Activated CD4-positive, alpha-beta T cell treated with anti-CD3 and anti-CD28 coated beads for 36 hours (primary cell): ENCODE measurements at regions of chr12 and their contacts with region 1.

Region 1: DNA sequence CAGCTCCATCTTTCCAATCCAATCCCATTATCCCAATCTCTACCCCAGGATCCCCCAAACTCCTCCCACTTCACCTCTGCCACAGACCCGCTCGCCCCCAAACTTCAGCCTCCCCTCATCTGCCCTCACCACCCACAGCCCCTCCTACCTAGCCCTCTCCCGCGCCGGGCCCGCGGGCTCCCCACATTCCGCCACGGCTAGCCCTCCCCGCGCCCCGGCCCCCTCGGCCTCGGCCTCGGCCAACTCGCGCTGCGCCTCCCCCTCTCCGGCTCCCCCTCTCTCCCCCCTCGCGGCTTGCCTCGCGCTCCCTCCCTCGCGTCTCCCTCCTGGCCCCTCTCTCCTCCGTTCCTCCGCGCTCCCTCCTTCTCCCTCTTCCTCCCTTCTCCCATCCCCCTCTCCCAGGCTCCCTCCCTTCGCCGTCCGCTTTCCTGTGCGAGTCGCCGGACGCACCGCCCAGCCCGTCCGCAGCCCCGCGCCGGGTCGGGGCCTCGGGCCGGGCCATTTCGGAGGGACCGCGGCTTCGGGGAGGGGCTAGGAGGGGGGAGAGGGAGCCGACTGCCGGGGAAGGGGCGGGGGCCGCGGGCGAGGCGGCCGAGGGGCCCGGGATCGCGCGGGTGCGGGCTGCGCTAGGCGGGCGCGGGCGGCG is at the start of gene ATN1:
- DNase-seq: peak; percentile 69
- ATAC-seq: peak; percentile 31
- H3K4me3 Mint-ChIP-seq: peak within 1 kb of the TSS; percentile 83
- H3K27ac Mint-ChIP-seq: peak within 1 kb of the TSS; percentile 84
- H3K4me1 Mint-ChIP-seq: peaks cover 58% of the 10 kb centered on the region
- H3K27me3 Mint-ChIP-seq: no peaks in the 10 kb centered on the region
- total RNA-seq, gene ATN1: 32.2 to 32.4 TPM

Region 2: GRCh38 chr12:6914246-6914946 is 13.1 kb before region 1 on chr12 and contains the start of gene ENO2:
- CTCF ChIA-PET with region 1: interaction called, 7 read pairs
- POLR2A ChIA-PET with region 1: no interaction called
- intact Hi-C with region 1: loop called in 1 of 2 experiments (anchors 2 kb)
- DNase-seq: peak; percentile 92
- ATAC-seq: peak; percentile 92
- H3K4me3 Mint-ChIP-seq: peak within 1 kb of the TSS; percentile 98
- H3K27ac Mint-ChIP-seq: peak within 1 kb of the TSS; percentile 80
- H3K4me1 Mint-ChIP-seq: peaks cover 35% of the 10 kb centered on the region
- H3K27me3 Mint-ChIP-seq: no peaks in the 10 kb centered on the region
- total RNA-seq, gene ENO2: 301 to 317 TPM

Region 3: DNA sequence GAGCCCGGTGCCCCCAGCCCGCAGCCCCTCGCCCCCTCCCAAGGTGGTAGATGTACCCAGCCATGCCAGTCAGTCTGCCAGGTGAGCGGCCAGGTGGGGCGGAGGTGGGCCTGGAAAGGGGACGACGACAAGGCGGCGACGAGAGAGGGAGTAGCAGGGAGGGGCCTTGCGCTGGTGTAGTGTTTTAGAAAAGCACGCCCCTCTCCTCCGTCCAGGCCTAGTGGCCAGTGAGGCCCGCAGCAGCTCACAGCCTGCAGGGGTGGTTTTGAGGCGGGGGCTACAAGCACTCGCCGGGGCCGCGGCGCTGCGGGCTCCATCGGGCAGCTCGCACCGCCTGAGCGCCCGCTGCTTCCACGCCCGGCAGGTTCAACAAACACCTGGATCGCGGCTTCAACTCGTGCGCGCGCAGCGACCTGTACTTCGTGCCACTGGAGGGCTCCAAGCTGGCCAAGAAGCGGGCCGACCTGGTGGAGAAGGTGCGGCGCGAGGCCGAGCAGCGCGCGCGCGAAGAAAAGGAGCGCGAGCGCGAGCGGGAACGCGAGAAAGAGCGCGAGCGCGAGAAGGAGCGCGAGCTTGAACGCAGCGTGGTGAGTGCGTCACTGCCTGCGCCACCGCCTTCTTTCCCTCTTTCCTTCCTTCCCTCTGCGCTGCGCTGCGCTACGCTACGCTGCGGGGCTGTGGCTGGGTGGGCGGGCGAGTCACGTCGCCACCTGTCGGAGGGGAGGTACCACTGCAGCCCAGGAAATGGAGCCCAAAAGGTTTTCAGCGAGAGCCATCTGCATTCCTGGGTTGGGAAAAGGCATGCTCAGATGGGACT is 10.2 kb after region 1 on chr12:
- CTCF ChIA-PET with region 1: interaction called, 59 read pairs
- POLR2A ChIA-PET with region 1: interaction called, 4 read pairs
- intact Hi-C with region 1: loop called in 1 of 2 experiments (anchors 1 kb)
- DNase-seq: peak; percentile 97
- ATAC-seq: peak; percentile 93
- H3K4me3 Mint-ChIP-seq: peak overlapping the region; percentile 83
- H3K27ac Mint-ChIP-seq: peak overlapping the region; percentile 96
- H3K4me1 Mint-ChIP-seq: peaks cover 52% of the 10 kb centered on the region
- H3K27me3 Mint-ChIP-seq: no peaks in the 10 kb centered on the region

Region 4: DNA sequence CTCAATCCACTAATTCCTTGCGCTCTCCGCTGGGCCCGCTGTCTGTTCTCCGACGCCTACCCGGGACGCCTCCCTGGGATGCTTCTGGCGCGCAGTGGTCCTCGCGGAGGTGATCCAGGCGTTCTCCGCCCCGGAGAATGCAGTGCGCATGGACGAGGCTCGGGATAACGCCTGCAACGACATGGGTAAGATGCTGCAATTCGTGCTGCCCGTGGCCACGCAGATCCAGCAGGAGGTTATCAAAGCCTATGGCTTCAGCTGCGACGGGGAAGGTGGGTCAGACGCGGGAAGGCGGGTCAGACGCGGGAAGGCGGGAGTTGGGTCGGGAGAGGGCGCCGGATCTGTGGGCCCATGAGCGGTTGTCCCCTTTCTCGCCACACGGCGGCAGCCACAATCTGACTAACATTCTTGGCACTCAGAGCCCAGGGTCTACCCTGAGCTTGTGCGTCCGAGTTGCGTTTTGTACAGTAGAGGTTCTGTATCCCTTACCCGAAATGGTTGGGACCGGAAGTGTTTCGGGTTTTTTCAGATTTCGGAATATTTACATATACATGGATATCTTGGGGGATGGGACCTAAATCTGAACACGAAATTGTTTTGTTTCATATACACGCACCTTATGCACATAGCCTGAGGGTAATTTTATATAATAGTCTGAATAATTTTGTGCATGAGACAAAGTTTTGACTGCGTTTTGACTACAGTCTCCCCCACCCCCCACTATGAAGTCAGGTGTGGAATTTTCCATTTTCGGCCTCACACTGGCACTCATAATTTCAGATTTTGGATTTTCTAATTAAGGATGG is 17.1 kb after region 1 on chr12:
- CTCF ChIA-PET with region 1: interaction called, 59 read pairs
- POLR2A ChIA-PET with region 1: interaction called, 26 read pairs
- intact Hi-C with region 1: loop called in 1 of 2 experiments (anchors 2 kb)
- DNase-seq: peak; percentile 94
- ATAC-seq: peak; percentile 54
- H3K4me3 Mint-ChIP-seq: peak overlapping the region; percentile 81
- H3K27ac Mint-ChIP-seq: peak overlapping the region; percentile 97
- H3K4me1 Mint-ChIP-seq: peaks cover 59% of the 10 kb centered on the region
- H3K27me3 Mint-ChIP-seq: no peaks in the 10 kb centered on the region

Region 5: DNA sequence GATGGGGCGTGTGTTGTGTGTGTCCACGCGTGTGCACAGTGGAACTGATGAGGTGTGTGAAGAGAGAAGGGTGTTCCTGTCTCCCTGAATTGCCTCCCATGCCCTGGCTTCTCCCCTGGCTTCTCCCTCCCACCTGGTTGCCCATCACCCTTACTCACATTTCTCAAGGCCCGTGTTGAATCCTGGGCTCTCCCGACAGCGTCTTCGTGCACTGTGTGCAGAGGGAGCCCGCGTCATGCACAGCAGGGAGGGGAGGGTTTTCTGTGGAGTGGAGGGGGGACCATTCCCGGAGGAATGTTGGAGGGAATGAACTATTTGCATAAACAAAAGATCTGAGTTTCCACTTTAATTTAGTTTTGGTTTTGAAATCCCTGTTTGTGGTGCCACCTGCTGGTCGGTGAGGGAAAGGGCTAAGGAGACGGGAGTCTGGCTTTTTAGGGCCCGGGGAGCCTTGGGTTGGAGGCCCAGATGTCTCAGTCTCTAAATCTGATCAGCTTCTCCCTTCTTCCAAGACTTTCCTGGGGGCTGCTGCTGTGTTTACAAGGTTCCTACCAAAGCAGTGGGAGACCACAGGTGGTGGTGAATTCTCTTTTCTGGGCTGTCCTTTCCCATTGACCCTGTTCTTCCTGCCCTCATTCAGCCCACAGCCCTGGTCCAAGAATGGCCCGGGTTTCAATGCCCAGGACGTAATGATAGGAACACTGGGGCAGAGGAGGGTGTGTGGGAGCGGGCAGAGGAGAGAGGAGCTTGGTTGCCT is 164.9 kb after region 1 on chr12 and contains the start of gene C1R:
- CTCF ChIA-PET with region 1: interaction called, 8 read pairs
- POLR2A ChIA-PET with region 1: no interaction called
- intact Hi-C with region 1: loop called (anchors 1 kb)
- DNase-seq: peak; percentile 85
- ATAC-seq: peak; percentile 86
- H3K4me3 Mint-ChIP-seq: peak within 1 kb of the TSS; percentile 59
- H3K27ac Mint-ChIP-seq: peak within 1 kb of the TSS; percentile 80
- H3K4me1 Mint-ChIP-seq: peaks cover 6% of the 10 kb centered on the region
- H3K27me3 Mint-ChIP-seq: no peaks in the 10 kb centered on the region
- total RNA-seq, gene C1R: 1.4 to 2.2 TPM